Uterus (tissue), 4 donors: ENCODE measurements at regions of chr10 and their contacts with region 1.

Region 1: GRCh38 chr10:78302989-78303854 is 269.6 kb downstream of the RPS24 start:
- DNase-seq: peak; percentile 86 to 96
- H3K4me3 ChIP-seq: peak overlapping the region; percentile 17 to 53
- H3K27ac ChIP-seq: peak overlapping the region; percentile 69 to 87
- H3K4me1 ChIP-seq: no peaks in the 10 kb centered on the region
- H3K27me3 ChIP-seq: no peaks in the 10 kb centered on the region
- CTCF ChIP-seq: peak; percentile 26 to 93 (median 69)
- POLR2A ChIP-seq: peak; percentile 32 to 81

Region 2: GRCh38 chr10:78972947-78973900 is 670.0 kb after region 1 on chr10:
- intact Hi-C with region 1: loop called (anchors 5 kb)
- DNase-seq: peak; percentile 80 to 87
- H3K4me3 ChIP-seq: peak overlapping the region; percentile 39 to 42
- H3K27ac ChIP-seq: peak overlapping the region; percentile 95 to 97
- H3K4me1 ChIP-seq: peaks cover 14 to 18% of the 10 kb centered on the region in 2 donors
- H3K27me3 ChIP-seq: no peaks in the 10 kb centered on the region
- CTCF ChIP-seq: no peak
- POLR2A ChIP-seq: peak in 1 of 2 donors; percentile 44